ENCODE measurements at regions of chr7 and their contacts with region 1.

Region 1: DNA sequence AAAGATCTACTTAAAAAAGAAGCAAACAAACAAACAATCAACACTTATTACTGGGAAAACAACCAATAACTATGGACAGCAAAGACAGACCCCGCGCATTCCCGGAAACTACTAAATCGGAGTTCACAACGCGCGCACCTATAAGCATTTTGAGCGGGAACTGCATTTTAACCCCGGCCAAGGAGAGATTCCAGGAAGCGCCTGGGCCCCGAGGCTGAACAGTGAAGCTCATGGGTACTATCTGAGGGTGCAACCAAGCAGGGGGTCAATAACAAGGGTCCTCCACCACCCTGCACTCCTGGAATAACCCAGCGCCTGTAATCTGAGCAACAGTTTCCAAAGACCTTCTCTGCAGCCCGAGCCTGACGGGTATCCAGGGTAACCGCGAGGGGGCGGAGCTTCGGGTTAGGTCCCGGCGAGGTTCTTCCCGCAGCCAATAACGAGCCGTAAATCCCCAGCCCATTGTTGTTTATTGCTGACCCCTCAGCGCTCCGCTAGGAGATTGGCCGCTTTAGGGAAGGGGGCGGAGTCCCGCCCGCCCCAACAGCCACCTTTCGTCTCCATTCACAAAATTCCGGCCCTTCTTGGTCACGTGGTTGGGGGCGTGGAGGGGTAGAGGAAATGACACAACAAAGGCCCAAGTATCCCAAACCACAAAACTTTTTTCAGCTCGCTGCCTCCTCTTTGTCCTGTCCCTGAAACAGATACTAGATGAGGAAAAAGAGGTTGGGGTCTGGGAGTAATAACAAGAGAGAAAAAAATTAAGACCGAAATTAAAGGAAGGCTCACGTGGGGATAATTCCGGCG is 1.7 kb upstream of the ETV1 start:
- DNase-seq: peak; percentile 99
- H3K4me3 Mint-ChIP-seq: no peak overlapping the region
- H3K27ac Mint-ChIP-seq: no peak overlapping the region
- H3K4me1 Mint-ChIP-seq: no peaks in the 10 kb centered on the region
- H3K27me3 Mint-ChIP-seq: no peaks in the 10 kb centered on the region
- CTCF ChIP-seq: no peak

Region 2: GRCh38 chr7:13742811-13743210 is 248.4 kb before region 1 on chr7:
- CTCF ChIA-PET with region 1: interaction called, 6 read pairs
- intact Hi-C with region 1: loop called (anchors 10 kb)
- DNase-seq: peak; percentile 41
- H3K4me3 Mint-ChIP-seq: no peak overlapping the region
- H3K27ac Mint-ChIP-seq: no peak overlapping the region
- H3K4me1 Mint-ChIP-seq: peaks cover 10% of the 10 kb centered on the region
- H3K27me3 Mint-ChIP-seq: no peaks in the 10 kb centered on the region
- CTCF ChIP-seq: peak; percentile 46

Region 3: GRCh38 chr7:13898967-13899670 is 92.1 kb before region 1 on chr7:
- CTCF ChIA-PET with region 1: no interaction called
- intact Hi-C with region 1: no loop called
- DNase-seq: no peak
- H3K4me3 Mint-ChIP-seq: no peak overlapping the region
- H3K27ac Mint-ChIP-seq: peak overlapping the region; percentile 14
- H3K4me1 Mint-ChIP-seq: no peaks in the 10 kb centered on the region
- H3K27me3 Mint-ChIP-seq: no peaks in the 10 kb centered on the region
- CTCF ChIP-seq: no peak

Region 4: GRCh38 chr7:13981070-13981469 is 10.1 kb before region 1 on chr7:
- CTCF ChIA-PET with region 1: interaction called, 25 read pairs
- intact Hi-C with region 1: loop called (anchors 1 kb)
- DNase-seq: peak; percentile 74
- H3K4me3 Mint-ChIP-seq: peak overlapping the region; percentile 59
- H3K27ac Mint-ChIP-seq: peak overlapping the region; percentile 87
- H3K4me1 Mint-ChIP-seq: peaks cover 34% of the 10 kb centered on the region
- H3K27me3 Mint-ChIP-seq: no peaks in the 10 kb centered on the region
- CTCF ChIP-seq: no peak

Region 5: GRCh38 chr7:14233076-14233867 is 242.1 kb after region 1 on chr7:
- CTCF ChIA-PET with region 1: interaction called, 4 read pairs
- intact Hi-C with region 1: loop called (anchors 5 kb)
- DNase-seq: peak; percentile 41
- H3K4me3 Mint-ChIP-seq: peak overlapping the region; percentile 14
- H3K27ac Mint-ChIP-seq: peak overlapping the region; percentile 46
- H3K4me1 Mint-ChIP-seq: peaks cover 41% of the 10 kb centered on the region
- H3K27me3 Mint-ChIP-seq: no peaks in the 10 kb centered on the region
- CTCF ChIP-seq: no peak

Region 6: GRCh38 chr7:14457568-14458453 is 466.6 kb after region 1 on chr7:
- CTCF ChIA-PET with region 1: interaction called, 5 read pairs
- intact Hi-C with region 1: loop called (anchors 2 kb)
- DNase-seq: peak; percentile 84
- H3K4me3 Mint-ChIP-seq: peak overlapping the region; percentile 39
- H3K27ac Mint-ChIP-seq: no peak overlapping the region
- H3K4me1 Mint-ChIP-seq: no peaks in the 10 kb centered on the region
- H3K27me3 Mint-ChIP-seq: no peaks in the 10 kb centered on the region
- CTCF ChIP-seq: peak; percentile 91

Region 7: DNA sequence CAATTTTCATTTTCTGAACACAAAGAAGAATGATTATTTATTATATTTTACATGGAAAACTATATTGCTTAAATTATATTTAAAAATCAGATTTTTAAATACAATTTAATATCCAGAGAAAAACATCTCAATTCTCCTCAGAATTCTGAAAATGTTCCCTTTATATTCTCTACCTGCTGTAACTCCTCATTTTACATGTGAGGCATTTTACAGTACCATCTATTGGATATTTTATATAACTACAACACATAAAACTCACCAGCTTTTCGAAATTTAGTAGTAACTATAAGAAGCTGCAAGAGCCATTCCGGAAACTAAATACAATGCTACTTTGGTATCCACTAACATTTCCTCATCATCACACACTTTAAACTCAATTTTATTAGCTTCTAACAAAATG is 646.8 kb after region 1 on chr7:
- CTCF ChIA-PET with region 1: interaction called, 3 read pairs
- intact Hi-C with region 1: loop called (anchors 5 kb)
- DNase-seq: no peak
- H3K4me3 Mint-ChIP-seq: no peak overlapping the region
- H3K27ac Mint-ChIP-seq: no peak overlapping the region
- H3K4me1 Mint-ChIP-seq: peaks cover 43% of the 10 kb centered on the region
- H3K27me3 Mint-ChIP-seq: no peaks in the 10 kb centered on the region
- CTCF ChIP-seq: peak; percentile 17

Measured in Calu3 (cell line).